ENCODE measurements at regions of chr2 and their contacts with region 1.

Region 1: GRCh38 chr2:231411831-231412617 is 16.5 kb downstream of the B3GNT7 start:
- DNase-seq: peak; percentile 74 to 80
- ATAC-seq: peak; percentile 99 to 100 (median 99)
- H3K4me3 ChIP-seq: peak overlapping the region; percentile 25
- H3K4me3 Mint-ChIP-seq: peak overlapping the region; percentile 89
- H3K27ac ChIP-seq: no peak overlapping the region
- H3K27ac Mint-ChIP-seq: peak overlapping the region in 1 of 2 donors; percentile 35
- H3K4me1 ChIP-seq: peaks cover 10% of the 10 kb centered on the region
- H3K4me1 Mint-ChIP-seq: peaks cover 2 to 7% of the 10 kb centered on the region in 2 donors
- H3K27me3 ChIP-seq: peaks cover 6% of the 10 kb centered on the region
- H3K27me3 Mint-ChIP-seq: peaks cover 0 to 17% of the 10 kb centered on the region in 2 donors
- CTCF ChIP-seq: peak; percentile 82

Region 2: GRCh38 chr2:231104115-231104713 is 307.8 kb before region 1 on chr2:
- intact Hi-C with region 1: loop called (anchors 1 kb)
- DNase-seq: peak; percentile 54 to 74
- ATAC-seq: peak; percentile 83 to 95 (median 94)
- H3K4me3 ChIP-seq: no peak overlapping the region
- H3K4me3 Mint-ChIP-seq: no peak overlapping the region
- H3K27ac ChIP-seq: no peak overlapping the region
- H3K27ac Mint-ChIP-seq: peak overlapping the region in 1 of 2 donors; percentile 59
- H3K4me1 ChIP-seq: no peaks in the 10 kb centered on the region
- H3K4me1 Mint-ChIP-seq: no peaks in the 10 kb centered on the region
- H3K27me3 ChIP-seq: no peaks in the 10 kb centered on the region
- H3K27me3 Mint-ChIP-seq: no peaks in the 10 kb centered on the region
- CTCF ChIP-seq: peak; percentile 71

Region 3: GRCh38 chr2:231227309-231228162 is 184.5 kb before region 1 on chr2:
- intact Hi-C with region 1: loop called (anchors 1 kb)
- DNase-seq: peak; percentile 25 to 72
- ATAC-seq: peak; percentile 93 to 100 (median 99)
- H3K4me3 ChIP-seq: no peak overlapping the region
- H3K4me3 Mint-ChIP-seq: no peak overlapping the region
- H3K27ac ChIP-seq: no peak overlapping the region
- H3K27ac Mint-ChIP-seq: no peak overlapping the region
- H3K4me1 ChIP-seq: no peaks in the 10 kb centered on the region
- H3K4me1 Mint-ChIP-seq: no peaks in the 10 kb centered on the region
- H3K27me3 ChIP-seq: no peaks in the 10 kb centered on the region
- H3K27me3 Mint-ChIP-seq: no peaks in the 10 kb centered on the region
- CTCF ChIP-seq: peak; percentile 80

Region 4: DNA sequence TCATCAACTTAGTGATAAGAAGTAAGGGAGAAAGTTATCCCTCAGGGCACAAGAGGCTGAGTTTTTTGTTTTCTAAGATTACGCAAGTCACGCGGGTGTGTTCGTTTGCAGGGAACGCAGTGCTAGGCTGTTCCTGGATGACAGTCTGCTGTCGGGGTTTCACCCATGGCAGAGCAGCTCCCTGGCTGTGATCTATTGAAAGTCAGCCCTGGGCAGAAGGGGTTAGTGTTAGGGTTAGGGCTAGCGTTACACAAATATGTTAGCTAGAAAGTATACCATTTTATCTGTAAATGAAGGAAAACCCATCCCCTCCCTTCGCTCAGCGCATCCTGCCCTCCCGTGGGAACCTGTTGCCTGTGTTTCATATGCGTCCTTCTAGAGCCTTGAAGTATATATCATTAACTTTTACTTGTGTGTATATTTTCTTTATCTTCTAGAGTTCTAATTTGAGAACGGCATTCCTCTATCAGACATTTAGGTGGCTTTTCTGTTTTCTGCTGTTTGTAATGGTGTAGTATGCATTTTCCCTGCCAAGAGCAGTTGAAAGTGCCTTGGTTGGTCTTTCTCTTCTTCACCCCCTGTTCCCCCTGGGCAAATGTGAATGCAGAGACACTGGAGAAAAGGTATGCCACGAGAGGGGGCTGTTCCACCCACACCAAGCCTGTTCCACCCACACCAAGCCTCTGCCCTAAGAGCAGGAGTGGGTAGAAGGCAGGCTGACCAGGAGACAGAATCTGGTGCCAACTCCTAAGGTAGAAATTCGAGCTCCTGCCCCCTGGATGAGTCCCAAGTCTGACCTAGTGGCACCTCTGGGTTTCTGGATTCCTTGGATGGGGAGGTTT is 166.6 kb before region 1 on chr2:
- intact Hi-C with region 1: loop called (anchors 5 kb)
- DNase-seq: peak in 1 of 2 donors; percentile 37
- ATAC-seq: peak in 2 of 3 donors; percentile 52 to 53
- H3K4me3 ChIP-seq: no peak overlapping the region
- H3K4me3 Mint-ChIP-seq: no peak overlapping the region
- H3K27ac ChIP-seq: no peak overlapping the region
- H3K27ac Mint-ChIP-seq: no peak overlapping the region
- H3K4me1 ChIP-seq: no peaks in the 10 kb centered on the region
- H3K4me1 Mint-ChIP-seq: peaks cover 0 to 8% of the 10 kb centered on the region in 2 donors
- H3K27me3 ChIP-seq: no peaks in the 10 kb centered on the region
- H3K27me3 Mint-ChIP-seq: peaks cover 0 to 2% of the 10 kb centered on the region in 2 donors
- CTCF ChIP-seq: no peak

Region 5: GRCh38 chr2:231297108-231297908 is 114.7 kb before region 1 on chr2:
- intact Hi-C with region 1: loop called (anchors 2 kb)
- DNase-seq: peak; percentile 42
- ATAC-seq: peak in 2 of 3 donors; percentile 77 to 78
- H3K4me3 ChIP-seq: no peak overlapping the region
- H3K4me3 Mint-ChIP-seq: no peak overlapping the region
- H3K27ac ChIP-seq: no peak overlapping the region
- H3K27ac Mint-ChIP-seq: peak overlapping the region; percentile 4 to 49
- H3K4me1 ChIP-seq: peaks cover 22% of the 10 kb centered on the region
- H3K4me1 Mint-ChIP-seq: peaks cover 38 to 40% of the 10 kb centered on the region in 2 donors
- H3K27me3 ChIP-seq: no peaks in the 10 kb centered on the region
- H3K27me3 Mint-ChIP-seq: no peaks in the 10 kb centered on the region
- CTCF ChIP-seq: peak; percentile 77

Region 6: GRCh38 chr2:231364961-231365810 is 46.8 kb before region 1 on chr2:
- intact Hi-C with region 1: loop called (anchors 5 kb)
- DNase-seq: no peak
- ATAC-seq: no peak
- H3K4me3 ChIP-seq: no peak overlapping the region
- H3K4me3 Mint-ChIP-seq: no peak overlapping the region
- H3K27ac ChIP-seq: no peak overlapping the region
- H3K27ac Mint-ChIP-seq: no peak overlapping the region
- H3K4me1 ChIP-seq: peaks cover 35% of the 10 kb centered on the region
- H3K4me1 Mint-ChIP-seq: peaks cover 27 to 33% of the 10 kb centered on the region in 2 donors
- H3K27me3 ChIP-seq: no peaks in the 10 kb centered on the region
- H3K27me3 Mint-ChIP-seq: no peaks in the 10 kb centered on the region
- CTCF ChIP-seq: no peak

Region 7: DNA sequence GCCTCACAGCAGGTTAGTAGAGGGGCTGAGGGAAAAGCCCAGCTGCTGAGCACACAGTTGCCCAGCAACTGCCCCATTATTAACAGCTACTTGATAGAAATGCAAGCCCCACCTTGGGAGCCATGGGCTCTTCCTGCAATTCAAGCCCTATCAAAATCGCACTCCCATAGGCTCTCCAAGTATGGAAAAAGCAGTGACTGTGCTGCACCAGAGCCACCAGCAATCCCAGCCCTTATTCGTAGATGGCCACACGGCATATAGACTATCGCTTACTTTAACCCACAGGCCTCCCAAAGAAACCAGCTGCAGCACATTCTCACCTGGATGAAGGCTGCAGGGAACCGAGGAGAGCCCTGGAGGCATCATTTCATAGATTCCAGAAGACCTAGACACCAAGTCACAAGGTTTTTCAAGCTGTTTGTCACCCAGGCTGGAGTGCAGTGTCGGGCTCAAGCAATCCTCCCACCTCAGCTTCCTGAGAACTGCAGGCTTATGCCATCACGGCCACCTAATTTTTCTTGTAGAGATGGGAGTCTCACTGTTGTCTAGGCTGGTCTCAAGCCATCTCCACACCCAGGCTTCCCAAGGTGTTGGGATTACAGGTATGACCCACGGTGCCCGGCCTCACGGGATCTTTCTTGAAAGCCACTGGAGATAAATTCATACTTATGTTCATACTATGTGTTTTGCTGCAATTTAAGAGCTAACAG is 40.9 kb after region 1 on chr2:
- intact Hi-C with region 1: loop called (anchors 5 kb)
- DNase-seq: no peak
- ATAC-seq: no peak
- H3K4me3 ChIP-seq: no peak overlapping the region
- H3K4me3 Mint-ChIP-seq: peak overlapping the region; percentile 37
- H3K27ac ChIP-seq: no peak overlapping the region
- H3K27ac Mint-ChIP-seq: peak overlapping the region; percentile 78 to 81
- H3K4me1 ChIP-seq: peaks cover 6% of the 10 kb centered on the region
- H3K4me1 Mint-ChIP-seq: peaks cover 24 to 25% of the 10 kb centered on the region in 2 donors
- H3K27me3 ChIP-seq: no peaks in the 10 kb centered on the region
- H3K27me3 Mint-ChIP-seq: no peaks in the 10 kb centered on the region
- CTCF ChIP-seq: no peak

Region 8: DNA sequence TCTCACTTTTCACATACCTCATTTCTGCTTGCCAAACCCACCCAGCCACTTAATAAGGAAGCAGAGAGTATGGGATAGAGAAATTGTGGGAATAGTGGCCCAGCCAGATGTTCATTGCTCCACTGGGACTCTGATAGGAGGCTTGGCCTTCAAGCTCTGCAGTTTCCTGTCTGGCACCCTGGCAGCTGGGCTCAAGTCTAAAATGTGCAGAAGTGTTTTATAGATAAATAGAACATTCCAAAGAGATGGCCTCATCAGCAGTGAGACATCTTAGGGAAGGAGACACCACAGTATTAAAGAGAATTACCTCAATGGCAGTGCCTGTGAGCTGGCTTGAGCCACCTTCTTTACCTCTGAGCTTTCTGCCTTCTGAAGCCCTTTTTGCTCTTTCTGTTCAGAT is 398.9 kb after region 1 on chr2:
- intact Hi-C with region 1: no loop called
- DNase-seq: no peak
- ATAC-seq: no peak
- H3K4me3 ChIP-seq: no peak overlapping the region
- H3K4me3 Mint-ChIP-seq: no peak overlapping the region
- H3K27ac ChIP-seq: no peak overlapping the region
- H3K27ac Mint-ChIP-seq: no peak overlapping the region
- H3K4me1 ChIP-seq: no peaks in the 10 kb centered on the region
- H3K4me1 Mint-ChIP-seq: no peaks in the 10 kb centered on the region
- H3K27me3 ChIP-seq: no peaks in the 10 kb centered on the region
- H3K27me3 Mint-ChIP-seq: no peaks in the 10 kb centered on the region
- CTCF ChIP-seq: no peak